Activated CD4-positive, alpha-beta T cell treated with anti-CD3 and anti-CD28 coated beads for 36 hours (primary cell): ENCODE measurements at regions of chr3 and their contacts with region 1.

Region 1: DNA sequence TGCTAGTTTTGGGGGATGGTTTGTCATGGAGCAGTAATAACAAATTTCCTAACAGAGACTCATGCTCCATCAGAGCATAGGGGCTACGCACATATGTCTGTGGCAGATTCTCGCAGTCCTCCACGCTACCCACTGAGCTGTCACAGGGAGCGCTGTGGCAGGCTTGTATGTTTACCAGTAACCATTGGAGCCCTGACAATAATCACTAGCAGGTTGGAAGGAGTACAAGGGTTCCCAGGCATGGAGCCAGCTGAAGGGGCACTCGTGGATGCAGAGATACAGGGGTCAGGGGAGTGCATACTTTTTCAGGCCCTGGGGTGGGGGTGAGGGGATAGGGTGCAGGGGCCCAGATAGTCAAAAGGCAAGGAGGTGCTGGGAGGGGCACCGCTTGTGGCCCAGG is 7.9 kb upstream of the GP9 start:
- DNase-seq: no peak
- ATAC-seq: no peak
- H3K4me3 Mint-ChIP-seq: no peak overlapping the region
- H3K27ac Mint-ChIP-seq: no peak overlapping the region
- H3K4me1 Mint-ChIP-seq: peaks cover 10% of the 10 kb centered on the region
- H3K27me3 Mint-ChIP-seq: no peaks in the 10 kb centered on the region

Region 2: GRCh38 chr3:128753715-128754114 is 299.0 kb before region 1 on chr3:
- CTCF ChIA-PET with region 1: no interaction called
- POLR2A ChIA-PET with region 1: no interaction called
- intact Hi-C with region 1: no loop called
- DNase-seq: no peak
- ATAC-seq: peak; percentile 68
- H3K4me3 Mint-ChIP-seq: no peak overlapping the region
- H3K27ac Mint-ChIP-seq: peak overlapping the region; percentile 78
- H3K4me1 Mint-ChIP-seq: peaks cover 63% of the 10 kb centered on the region
- H3K27me3 Mint-ChIP-seq: no peaks in the 10 kb centered on the region

Region 3: GRCh38 chr3:128984596-128984995 is 68.1 kb before region 1 on chr3:
- CTCF ChIA-PET with region 1: interaction called, 12 read pairs
- POLR2A ChIA-PET with region 1: no interaction called
- intact Hi-C with region 1: no loop called
- DNase-seq: no peak
- ATAC-seq: no peak
- H3K4me3 Mint-ChIP-seq: no peak overlapping the region
- H3K27ac Mint-ChIP-seq: no peak overlapping the region
- H3K4me1 Mint-ChIP-seq: no peaks in the 10 kb centered on the region
- H3K27me3 Mint-ChIP-seq: no peaks in the 10 kb centered on the region

Region 4: DNA sequence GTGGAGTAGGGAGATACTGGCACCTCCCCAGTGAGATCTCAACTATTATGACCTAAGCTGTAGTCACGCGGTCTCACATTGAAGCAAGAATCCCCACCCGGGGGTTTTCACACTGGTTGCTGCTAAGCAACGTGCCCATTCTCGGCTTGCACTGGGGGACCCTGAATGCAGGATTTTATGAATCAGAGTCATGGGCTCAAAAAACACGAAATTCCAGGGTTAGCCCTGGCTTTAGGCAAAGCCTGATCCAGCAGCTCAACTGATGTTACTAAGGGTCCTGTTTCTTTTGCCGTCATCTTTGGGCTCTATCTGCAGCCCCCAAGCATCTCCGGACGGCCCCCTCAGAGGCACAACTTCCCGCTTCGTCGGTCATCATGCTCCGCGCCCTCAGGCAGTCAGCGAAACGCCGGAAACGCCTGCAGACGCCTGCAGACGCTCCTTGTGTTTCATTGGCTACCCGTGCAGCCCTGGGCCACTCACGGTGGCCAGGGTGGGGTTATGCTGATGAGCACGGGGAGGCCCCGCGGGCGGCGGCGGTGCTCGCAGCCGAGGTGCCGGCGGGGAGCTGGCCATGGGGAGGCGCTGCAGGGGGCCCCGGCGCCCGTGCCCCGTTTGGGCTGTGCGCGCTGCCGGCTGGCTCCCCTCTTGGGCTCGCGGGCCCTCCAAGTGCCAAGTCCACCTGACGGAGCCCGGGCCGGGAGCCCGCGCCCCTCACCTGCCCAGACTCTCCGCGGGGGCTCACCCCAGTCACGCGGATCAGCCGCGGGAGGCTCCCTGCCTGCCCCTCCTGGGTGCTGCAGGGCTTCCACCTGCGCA is 25.7 kb before region 1 on chr3:
- CTCF ChIA-PET with region 1: interaction called, 11 read pairs
- POLR2A ChIA-PET with region 1: no interaction called
- intact Hi-C with region 1: loop called in 1 of 2 experiments (anchors 1 kb)
- DNase-seq: peak; percentile 96
- ATAC-seq: peak; percentile 100
- H3K4me3 Mint-ChIP-seq: peak overlapping the region; percentile 72
- H3K27ac Mint-ChIP-seq: peak overlapping the region; percentile 81
- H3K4me1 Mint-ChIP-seq: peaks cover 12% of the 10 kb centered on the region
- H3K27me3 Mint-ChIP-seq: no peaks in the 10 kb centered on the region

Region 5: GRCh38 chr3:129040579-129041300 is 11.9 kb before region 1 on chr3:
- CTCF ChIA-PET with region 1: interaction called, 13 read pairs
- POLR2A ChIA-PET with region 1: no interaction called
- intact Hi-C with region 1: no loop called
- DNase-seq: no peak
- ATAC-seq: no peak
- H3K4me3 Mint-ChIP-seq: no peak overlapping the region
- H3K27ac Mint-ChIP-seq: no peak overlapping the region
- H3K4me1 Mint-ChIP-seq: peaks cover 6% of the 10 kb centered on the region
- H3K27me3 Mint-ChIP-seq: peaks cover 16% of the 10 kb centered on the region

Region 6: DNA sequence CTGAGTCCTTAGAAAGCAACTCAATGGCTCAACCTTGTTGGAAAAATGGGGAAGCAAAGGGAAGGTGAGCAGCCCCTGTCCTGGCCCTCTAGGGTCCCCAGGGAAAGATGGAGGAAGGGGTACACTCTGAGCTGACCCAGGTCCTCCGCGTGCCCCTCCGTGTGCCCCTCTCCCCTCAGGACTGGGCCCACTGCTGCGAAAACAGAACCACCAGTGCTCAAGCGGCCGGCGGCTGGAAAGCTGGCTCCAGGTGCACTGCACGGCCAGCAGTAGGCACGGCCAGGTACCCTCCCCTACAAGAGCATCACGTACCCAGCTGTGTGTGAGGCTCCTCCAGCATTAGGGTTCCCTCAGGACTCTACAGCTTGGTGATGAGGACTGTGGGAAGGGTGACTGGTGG is 42.6 kb after region 1 on chr3:
- CTCF ChIA-PET with region 1: interaction called, 13 read pairs
- POLR2A ChIA-PET with region 1: no interaction called
- intact Hi-C with region 1: no loop called
- DNase-seq: no peak
- ATAC-seq: no peak
- H3K4me3 Mint-ChIP-seq: no peak overlapping the region
- H3K27ac Mint-ChIP-seq: no peak overlapping the region
- H3K4me1 Mint-ChIP-seq: peaks cover 30% of the 10 kb centered on the region
- H3K27me3 Mint-ChIP-seq: no peaks in the 10 kb centered on the region

Region 7: DNA sequence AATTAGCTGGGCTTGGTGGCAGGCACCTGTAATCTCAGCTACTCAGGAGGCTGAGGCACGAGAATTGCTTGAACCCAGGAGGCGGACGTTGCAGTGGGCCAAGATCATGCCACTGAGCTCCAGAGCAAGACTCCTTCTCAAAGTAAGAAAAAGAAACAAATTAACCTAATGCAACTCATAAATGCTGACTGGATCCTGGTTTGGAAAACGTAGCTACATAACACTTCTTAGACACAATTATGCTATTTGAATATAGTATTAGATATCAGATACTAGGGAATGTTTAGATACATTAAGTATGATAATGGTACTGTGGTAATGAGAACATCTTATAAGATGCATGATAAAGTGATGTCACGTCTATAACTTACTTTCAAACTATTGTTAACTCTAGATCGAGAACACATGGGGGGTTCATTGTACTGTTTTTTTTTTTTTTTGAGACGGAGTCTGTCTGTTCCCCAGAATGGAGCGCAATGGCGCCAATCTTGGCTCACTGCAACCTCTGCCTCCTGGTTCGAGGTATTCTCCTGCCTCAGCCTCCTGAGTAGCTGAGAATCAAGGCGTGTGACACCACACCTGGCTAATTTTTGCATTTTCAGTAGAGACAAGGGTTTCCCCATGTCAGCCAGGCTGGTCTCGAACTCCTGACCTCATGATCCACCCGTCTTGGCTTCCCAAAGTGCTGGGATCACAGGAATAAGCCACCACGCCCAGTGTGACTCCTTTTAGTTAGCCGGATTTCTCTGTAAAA is 114.1 kb after region 1 on chr3:
- CTCF ChIA-PET with region 1: interaction called, 11 read pairs
- POLR2A ChIA-PET with region 1: interaction called, 5 read pairs
- intact Hi-C with region 1: loop called (anchors 1 kb)
- DNase-seq: no peak
- ATAC-seq: no peak
- H3K4me3 Mint-ChIP-seq: no peak overlapping the region
- H3K27ac Mint-ChIP-seq: no peak overlapping the region
- H3K4me1 Mint-ChIP-seq: peaks cover 19% of the 10 kb centered on the region
- H3K27me3 Mint-ChIP-seq: no peaks in the 10 kb centered on the region